Activated CD8-positive, alpha-beta T cell treated with anti-CD3 and anti-CD28 coated beads for 36 hours (primary cell): ENCODE measurements at regions of chr1 and their contacts with region 1.

Region 1: GRCh38 chr1:155091071-155091709 is 12.6 kb downstream of the EFNA3 start:
- DNase-seq: peak; percentile 86
- ATAC-seq: peak; percentile 88
- H3K4me3 Mint-ChIP-seq: peak overlapping the region; percentile 12
- H3K27ac Mint-ChIP-seq: no peak overlapping the region
- H3K4me1 Mint-ChIP-seq: peaks cover 2% of the 10 kb centered on the region
- H3K27me3 Mint-ChIP-seq: peaks cover 9% of the 10 kb centered on the region
- CTCF ChIP-seq: peak; percentile 99

Region 2: GRCh38 chr1:154463512-154463990 is 627.6 kb before region 1 on chr1:
- CTCF ChIA-PET with region 1: no interaction called
- POLR2A ChIA-PET with region 1: no interaction called
- intact Hi-C with region 1: no loop called
- DNase-seq: peak; percentile 78
- ATAC-seq: peak; percentile 93
- H3K4me3 Mint-ChIP-seq: no peak overlapping the region
- H3K27ac Mint-ChIP-seq: peak overlapping the region; percentile 51
- H3K4me1 Mint-ChIP-seq: peaks cover 43% of the 10 kb centered on the region
- H3K27me3 Mint-ChIP-seq: no peaks in the 10 kb centered on the region
- CTCF ChIP-seq: no peak

Region 3: DNA sequence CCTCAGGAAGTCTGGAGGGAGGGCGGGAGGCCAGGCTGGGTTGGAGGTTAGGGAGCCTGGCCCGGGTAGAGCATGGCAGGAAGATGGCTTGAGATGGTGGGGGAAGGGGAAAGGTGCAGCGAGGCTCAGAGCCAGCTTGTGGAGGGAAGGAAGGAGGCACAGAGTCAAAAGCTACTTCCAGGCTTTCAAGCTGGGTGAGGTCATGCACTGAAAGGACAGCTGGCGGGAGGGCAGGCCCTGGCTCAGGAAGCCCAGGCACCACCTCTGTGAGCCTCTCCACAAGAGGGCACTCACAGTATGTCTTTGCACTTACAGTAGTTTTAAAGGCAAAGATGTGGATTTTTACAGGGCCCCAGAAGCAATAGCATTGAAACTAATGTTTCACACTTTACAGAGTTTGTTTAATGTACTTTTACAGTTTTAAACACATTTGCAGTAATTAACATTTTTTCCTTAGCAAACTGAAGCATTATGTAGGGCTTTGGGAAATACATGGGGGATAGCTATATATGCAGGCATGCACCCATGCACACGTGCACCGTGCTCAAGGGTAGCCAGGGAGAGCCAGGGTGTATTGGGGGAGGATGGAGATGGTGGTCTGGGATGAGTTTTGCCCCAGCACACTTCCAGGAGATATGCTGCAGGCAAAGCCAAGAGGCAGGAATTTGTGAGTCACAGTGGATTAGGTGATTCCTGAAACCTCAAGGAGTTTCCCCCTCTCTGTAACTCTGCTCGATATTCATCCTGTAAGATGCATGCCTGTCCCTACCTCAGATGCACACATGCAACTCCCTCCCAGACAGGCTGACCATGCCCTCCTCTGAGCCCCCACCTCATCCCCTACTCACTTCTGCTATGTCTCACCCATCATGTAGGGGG is 46.1 kb before region 1 on chr1:
- CTCF ChIA-PET with region 1: interaction called, 278 read pairs
- POLR2A ChIA-PET with region 1: no interaction called
- intact Hi-C with region 1: loop called (anchors 5 kb)
- DNase-seq: peak; percentile 82
- ATAC-seq: peak; percentile 98
- H3K4me3 Mint-ChIP-seq: no peak overlapping the region
- H3K27ac Mint-ChIP-seq: peak overlapping the region; percentile 10
- H3K4me1 Mint-ChIP-seq: peaks cover 5% of the 10 kb centered on the region
- H3K27me3 Mint-ChIP-seq: peaks cover 2% of the 10 kb centered on the region
- CTCF ChIP-seq: peak; percentile 60

Region 4: GRCh38 chr1:155070721-155071569 is 20.2 kb before region 1 on chr1:
- CTCF ChIA-PET with region 1: interaction called, 278 read pairs
- POLR2A ChIA-PET with region 1: no interaction called
- intact Hi-C with region 1: no loop called
- DNase-seq: peak; percentile 90
- ATAC-seq: peak; percentile 94
- H3K4me3 Mint-ChIP-seq: peak overlapping the region; percentile 56
- H3K27ac Mint-ChIP-seq: no peak overlapping the region
- H3K4me1 Mint-ChIP-seq: peaks cover 21% of the 10 kb centered on the region
- H3K27me3 Mint-ChIP-seq: no peaks in the 10 kb centered on the region
- CTCF ChIP-seq: peak; percentile 64

Region 5: GRCh38 chr1:155105604-155106022 is 14.4 kb after region 1 on chr1:
- CTCF ChIA-PET with region 1: interaction called, 11 read pairs
- POLR2A ChIA-PET with region 1: no interaction called
- intact Hi-C with region 1: no loop called
- DNase-seq: no peak
- ATAC-seq: no peak
- H3K4me3 Mint-ChIP-seq: no peak overlapping the region
- H3K27ac Mint-ChIP-seq: no peak overlapping the region
- H3K4me1 Mint-ChIP-seq: no peaks in the 10 kb centered on the region
- H3K27me3 Mint-ChIP-seq: no peaks in the 10 kb centered on the region
- CTCF ChIP-seq: no peak

Region 6: GRCh38 chr1:155135415-155136028 is 44.3 kb after region 1 on chr1 and contains the start of gene SLC50A1:
- CTCF ChIA-PET with region 1: interaction called, 31 read pairs
- POLR2A ChIA-PET with region 1: interaction called, 4 read pairs
- intact Hi-C with region 1: no loop called
- DNase-seq: peak; percentile 96
- ATAC-seq: peak; percentile 80
- H3K4me3 Mint-ChIP-seq: peak within 1 kb of the TSS; percentile 99
- H3K27ac Mint-ChIP-seq: peak within 1 kb of the TSS; percentile 99
- H3K4me1 Mint-ChIP-seq: peaks cover 33% of the 10 kb centered on the region
- H3K27me3 Mint-ChIP-seq: no peaks in the 10 kb centered on the region
- CTCF ChIP-seq: no peak
- total RNA-seq, gene SLC50A1: 59.7 to 64.0 TPM

Region 7: DNA sequence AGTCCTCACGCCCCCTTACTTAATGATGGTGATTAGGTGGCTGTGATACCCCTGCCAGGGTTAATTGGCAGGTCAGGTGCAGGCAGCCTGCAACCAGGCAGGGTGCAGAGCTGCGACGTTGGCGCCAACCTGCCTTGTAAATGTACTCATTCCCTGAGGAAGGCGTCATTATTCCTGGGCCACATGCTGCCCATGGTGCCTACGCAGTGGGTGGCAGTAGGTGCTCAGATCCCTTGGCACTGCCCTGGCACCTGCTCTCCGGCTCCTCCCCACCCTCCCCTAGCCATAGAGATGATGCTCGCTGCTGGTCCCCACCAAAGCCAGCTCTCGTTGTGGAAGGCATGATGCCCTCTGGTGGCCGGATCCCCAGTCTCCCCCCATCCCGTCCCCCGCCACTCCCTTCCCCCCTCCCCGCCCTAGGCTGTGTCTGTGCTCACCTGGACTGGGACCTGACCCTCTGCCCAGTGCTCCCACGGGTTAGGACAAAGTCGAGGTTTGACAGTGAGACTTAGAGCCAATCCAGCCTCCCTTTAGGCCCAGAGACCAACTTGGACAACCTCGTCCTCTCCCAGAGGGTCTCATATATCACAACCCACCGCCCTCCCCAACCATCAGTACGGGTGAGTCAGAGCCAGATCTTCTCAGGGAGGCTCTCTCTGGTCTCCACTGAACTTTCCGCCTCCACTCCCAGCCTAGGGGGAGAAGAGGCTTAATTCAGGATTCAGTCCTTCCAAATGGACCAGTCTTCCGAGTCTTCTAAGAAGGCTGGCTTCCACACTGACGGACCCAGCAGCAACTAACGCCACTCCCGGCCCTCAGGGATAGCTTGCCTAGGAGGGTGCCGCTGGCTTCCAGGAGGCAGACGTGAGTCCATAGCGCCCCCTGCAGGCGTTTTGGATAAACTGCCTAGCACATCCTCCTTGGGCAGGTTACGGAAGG is 76.2 kb after region 1 on chr1:
- CTCF ChIA-PET with region 1: interaction called, 312 read pairs
- POLR2A ChIA-PET with region 1: interaction called, 10 read pairs
- intact Hi-C with region 1: loop called (anchors 2 kb)
- DNase-seq: peak; percentile 94
- ATAC-seq: peak; percentile 82
- H3K4me3 Mint-ChIP-seq: peak overlapping the region; percentile 50
- H3K27ac Mint-ChIP-seq: no peak overlapping the region
- H3K4me1 Mint-ChIP-seq: peaks cover 25% of the 10 kb centered on the region
- H3K27me3 Mint-ChIP-seq: no peaks in the 10 kb centered on the region
- CTCF ChIP-seq: peak; percentile 90